Caco-2 (cell line): ENCODE measurements at regions of chr14 and their contacts with region 1.

Region 1: GRCh38 chr14:20469242-20469889 is at the start of gene PNP:
- DNase-seq: peak; percentile 94
- H3K4me3 ChIP-seq: peak within 1 kb of the TSS; percentile 90
- H3K4me3 Mint-ChIP-seq: peak within 1 kb of the TSS; percentile 83
- H3K27ac Mint-ChIP-seq: peak within 1 kb of the TSS; percentile 90
- H3K4me1 ChIP-seq: peaks cover 9% of the 10 kb centered on the region
- H3K4me1 Mint-ChIP-seq: peaks cover 21% of the 10 kb centered on the region
- H3K27me3 ChIP-seq: no peaks in the 10 kb centered on the region
- H3K27me3 Mint-ChIP-seq: no peaks in the 10 kb centered on the region
- CTCF ChIP-seq: no peak
- total RNA-seq, gene PNP: 59.1 and 67.2 TPM in 2 replicates

Region 2: GRCh38 chr14:20454516-20455354 is 14.6 kb before region 1 on chr14 and contains the starts of genes APEX1 and OSGEP:
- CTCF ChIA-PET with region 1: no interaction called
- POLR2A ChIA-PET with region 1: interaction called, 16 read pairs
- intact Hi-C with region 1: no loop called
- DNase-seq: peak; percentile 97 to 99
- H3K4me3 ChIP-seq: peak within 1 kb of the TSS; percentile 63
- H3K4me3 Mint-ChIP-seq: no peak within 1 kb of the TSS
- H3K27ac Mint-ChIP-seq: no peak within 1 kb of the TSS
- H3K4me1 ChIP-seq: no peaks in the 10 kb centered on the region
- H3K4me1 Mint-ChIP-seq: peaks cover 1% of the 10 kb centered on the region
- H3K27me3 ChIP-seq: no peaks in the 10 kb centered on the region
- H3K27me3 Mint-ChIP-seq: no peaks in the 10 kb centered on the region
- CTCF ChIP-seq: no peak
- total RNA-seq, gene APEX1: 176 and 185 TPM in 2 replicates
- total RNA-seq, gene OSGEP: 63.1 and 64.3 TPM in 2 replicates

Region 3: DNA sequence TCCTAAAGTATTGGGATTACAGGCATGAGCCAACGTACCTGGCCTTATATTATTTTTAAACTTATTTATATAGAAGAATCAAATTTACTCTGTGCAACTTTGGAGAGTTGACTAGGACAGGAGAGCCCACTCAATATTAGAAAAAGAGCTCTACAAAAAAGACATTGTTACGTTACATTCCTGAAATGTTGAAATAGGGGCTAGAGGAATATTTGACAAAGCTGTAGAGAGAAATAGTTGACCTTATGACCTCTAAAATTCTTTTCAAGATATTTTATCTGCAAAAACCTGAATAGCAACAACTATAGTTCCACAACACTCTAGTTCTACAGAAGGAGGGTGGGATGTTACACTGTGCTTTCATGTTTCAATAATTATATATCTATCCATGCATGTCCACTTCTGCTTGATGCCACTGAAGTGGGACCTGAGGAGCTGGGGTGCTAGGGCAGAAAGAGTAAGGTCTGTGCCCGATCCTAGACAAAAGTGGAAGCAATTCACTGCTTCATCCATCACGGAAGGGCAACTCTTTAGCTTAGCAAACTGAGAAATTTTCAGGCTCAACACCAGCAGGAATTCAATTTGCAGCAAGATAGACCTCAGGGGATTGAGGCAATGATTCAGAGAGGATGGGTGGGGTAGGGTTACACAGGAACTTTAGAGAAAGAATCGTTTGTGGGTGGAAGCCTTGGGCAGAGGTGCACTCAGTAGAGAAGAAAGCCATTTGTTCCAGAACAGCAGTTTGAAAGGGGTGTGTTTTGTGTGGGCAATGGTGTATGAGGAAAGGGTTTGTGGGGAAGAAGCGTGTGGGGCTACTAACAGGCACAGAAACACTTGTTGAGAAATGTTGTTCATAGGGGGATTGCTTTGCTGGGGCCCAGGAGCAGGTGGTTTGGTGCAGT is 20.0 kb after region 1 on chr14:
- CTCF ChIA-PET with region 1: no interaction called
- POLR2A ChIA-PET with region 1: interaction called, 3 read pairs
- intact Hi-C with region 1: loop called (anchors 2 kb)
- DNase-seq: peak in 1 of 2 experiments; percentile 2
- H3K4me3 ChIP-seq: no peak overlapping the region
- H3K4me3 Mint-ChIP-seq: no peak overlapping the region
- H3K27ac Mint-ChIP-seq: peak overlapping the region; percentile 14
- H3K4me1 ChIP-seq: peaks cover 37% of the 10 kb centered on the region
- H3K4me1 Mint-ChIP-seq: peaks cover 29% of the 10 kb centered on the region
- H3K27me3 ChIP-seq: no peaks in the 10 kb centered on the region
- H3K27me3 Mint-ChIP-seq: no peaks in the 10 kb centered on the region
- CTCF ChIP-seq: no peak

Region 4: GRCh38 chr14:20904393-20905029 is 435.1 kb after region 1 on chr14:
- CTCF ChIA-PET with region 1: no interaction called
- POLR2A ChIA-PET with region 1: no interaction called
- intact Hi-C with region 1: no loop called
- DNase-seq: no peak
- H3K4me3 ChIP-seq: no peak overlapping the region
- H3K4me3 Mint-ChIP-seq: no peak overlapping the region
- H3K27ac Mint-ChIP-seq: no peak overlapping the region
- H3K4me1 ChIP-seq: no peaks in the 10 kb centered on the region
- H3K4me1 Mint-ChIP-seq: no peaks in the 10 kb centered on the region
- H3K27me3 ChIP-seq: no peaks in the 10 kb centered on the region
- H3K27me3 Mint-ChIP-seq: peaks cover 11% of the 10 kb centered on the region
- CTCF ChIP-seq: peak in 1 of 2 experiments; percentile 25